Activated B cell treated with CpG ODN at 0.5 μM for 24 hours (primary cell): ENCODE measurements at regions of chr2 and their contacts with region 1.

Region 1: GRCh38 chr2:61888267-61889055 is at the start of gene CCT4:
- DNase-seq: peak; percentile 99
- ATAC-seq: peak; percentile 85
- H3K4me3 Mint-ChIP-seq: peak within 1 kb of the TSS; percentile 100
- H3K27ac Mint-ChIP-seq: peak within 1 kb of the TSS; percentile 99
- H3K4me1 Mint-ChIP-seq: peaks cover 23% of the 10 kb centered on the region
- H3K27me3 Mint-ChIP-seq: no peaks in the 10 kb centered on the region
- CTCF ChIP-seq: no peak
- total RNA-seq, gene CCT4: 172 and 188 TPM in 2 replicates

Region 2: GRCh38 chr2:61065715-61066709 is 822.4 kb before region 1 on chr2 and contains the start of gene SANBR:
- CTCF ChIA-PET with region 1: no interaction called
- POLR2A ChIA-PET with region 1: interaction called, 12 read pairs
- intact Hi-C with region 1: no loop called
- DNase-seq: peak; percentile 85
- ATAC-seq: peak; percentile 98
- H3K4me3 Mint-ChIP-seq: peak within 1 kb of the TSS; percentile 96
- H3K27ac Mint-ChIP-seq: peak within 1 kb of the TSS; percentile 82
- H3K4me1 Mint-ChIP-seq: peaks cover 11% of the 10 kb centered on the region
- H3K27me3 Mint-ChIP-seq: no peaks in the 10 kb centered on the region
- CTCF ChIP-seq: no peak
- total RNA-seq, gene SANBR: 2.0 and 2.2 TPM in 2 replicates

Region 3: GRCh38 chr2:61707969-61708852 is 180.2 kb before region 1 on chr2:
- CTCF ChIA-PET with region 1: no interaction called
- POLR2A ChIA-PET with region 1: interaction called, 16 read pairs
- intact Hi-C with region 1: no loop called
- DNase-seq: no peak
- ATAC-seq: peak; percentile 96
- H3K4me3 Mint-ChIP-seq: no peak overlapping the region
- H3K27ac Mint-ChIP-seq: peak overlapping the region; percentile 38
- H3K4me1 Mint-ChIP-seq: peaks cover 8% of the 10 kb centered on the region
- H3K27me3 Mint-ChIP-seq: no peaks in the 10 kb centered on the region
- CTCF ChIP-seq: no peak

Region 4: DNA sequence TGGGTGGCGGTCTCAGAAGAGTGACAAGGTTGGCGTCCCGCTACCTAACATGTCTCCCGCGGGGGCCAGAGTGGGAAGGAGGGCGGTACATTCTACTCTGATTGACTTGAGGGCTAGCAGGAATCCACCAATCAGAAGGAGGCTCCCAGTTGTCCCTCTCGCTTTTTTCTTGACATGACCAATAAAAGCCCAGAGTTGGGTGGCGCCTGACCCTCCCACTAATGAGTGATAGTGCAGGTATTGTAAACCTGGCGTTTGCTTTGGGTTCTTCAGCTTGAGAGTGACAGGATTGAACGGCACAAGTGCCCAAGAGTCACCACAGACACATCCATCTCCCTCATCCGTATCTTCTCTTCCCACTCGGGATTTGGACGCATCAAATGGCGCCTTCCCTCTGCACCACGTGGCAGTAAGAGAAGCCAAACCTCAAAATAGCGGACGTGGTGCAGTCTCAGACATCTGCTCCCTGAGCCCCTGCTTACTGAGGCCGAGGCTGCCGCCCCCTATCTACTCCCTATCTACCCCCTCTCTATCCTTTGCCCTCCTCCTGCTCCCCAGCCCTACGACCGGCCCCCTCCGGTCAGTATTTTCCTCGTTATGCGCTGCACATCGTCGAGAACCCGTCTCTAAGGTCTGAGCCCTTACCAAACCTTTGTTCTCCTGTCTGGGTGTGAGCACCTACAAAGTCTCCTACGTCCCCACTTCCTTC is 33.8 kb before region 1 on chr2:
- CTCF ChIA-PET with region 1: no interaction called
- POLR2A ChIA-PET with region 1: interaction called, 3 read pairs
- intact Hi-C with region 1: loop called (anchors 1 kb)
- DNase-seq: peak; percentile 69
- ATAC-seq: peak; percentile 86
- H3K4me3 Mint-ChIP-seq: peak overlapping the region; percentile 94
- H3K27ac Mint-ChIP-seq: peak overlapping the region; percentile 95
- H3K4me1 Mint-ChIP-seq: peaks cover 19% of the 10 kb centered on the region
- H3K27me3 Mint-ChIP-seq: no peaks in the 10 kb centered on the region
- CTCF ChIP-seq: no peak

Region 5: GRCh38 chr2:62287899-62288880 is 399.7 kb after region 1 on chr2:
- CTCF ChIA-PET with region 1: no interaction called
- POLR2A ChIA-PET with region 1: no interaction called
- intact Hi-C with region 1: no loop called
- DNase-seq: no peak
- ATAC-seq: no peak
- H3K4me3 Mint-ChIP-seq: no peak overlapping the region
- H3K27ac Mint-ChIP-seq: no peak overlapping the region
- H3K4me1 Mint-ChIP-seq: peaks cover 4% of the 10 kb centered on the region
- H3K27me3 Mint-ChIP-seq: peaks cover 2% of the 10 kb centered on the region
- CTCF ChIP-seq: no peak

Region 6: GRCh38 chr2:62705007-62705829 is 816.8 kb after region 1 on chr2 and contains the start of gene EHBP1:
- CTCF ChIA-PET with region 1: no interaction called
- POLR2A ChIA-PET with region 1: no interaction called
- intact Hi-C with region 1: loop called (anchors 1 kb)
- DNase-seq: peak; percentile 98
- ATAC-seq: peak; percentile 93
- H3K4me3 Mint-ChIP-seq: peak within 1 kb of the TSS; percentile 95
- H3K27ac Mint-ChIP-seq: peak within 1 kb of the TSS; percentile 78
- H3K4me1 Mint-ChIP-seq: peaks cover 34% of the 10 kb centered on the region
- H3K27me3 Mint-ChIP-seq: no peaks in the 10 kb centered on the region
- CTCF ChIP-seq: no peak
- total RNA-seq, gene EHBP1: 24.0 and 25.0 TPM in 2 replicates